Activated CD4-positive, alpha-beta memory T cell treated with anti-CD3 and anti-CD28 coated beads for 36 hours (primary cell): ENCODE measurements at regions of chr1 and their contacts with region 1.

Region 1: GRCh38 chr1:150259758-150260669 is 2.4 kb downstream of the CA14 start:
- DNase-seq: no peak
- H3K4me3 Mint-ChIP-seq: no peak overlapping the region
- H3K27ac Mint-ChIP-seq: no peak overlapping the region
- H3K4me1 Mint-ChIP-seq: peaks cover 18% of the 10 kb centered on the region
- H3K27me3 Mint-ChIP-seq: peaks cover 27% of the 10 kb centered on the region

Region 2: GRCh38 chr1:150293433-150294168 is 33.6 kb after region 1 on chr1 and contains the start of gene MRPS21:
- CTCF ChIA-PET with region 1: interaction called, 14 read pairs
- POLR2A ChIA-PET with region 1: interaction called, 3 read pairs
- intact Hi-C with region 1: no loop called
- DNase-seq: peak; percentile 94
- H3K4me3 Mint-ChIP-seq: peak within 1 kb of the TSS; percentile 96
- H3K27ac Mint-ChIP-seq: peak within 1 kb of the TSS; percentile 94
- H3K4me1 Mint-ChIP-seq: peaks cover 39% of the 10 kb centered on the region
- H3K27me3 Mint-ChIP-seq: no peaks in the 10 kb centered on the region
- total RNA-seq, gene MRPS21: 78.6 to 82.9 TPM

Region 3: GRCh38 chr1:150429805-150430204 is 169.8 kb after region 1 on chr1:
- CTCF ChIA-PET with region 1: interaction called, 3 read pairs
- POLR2A ChIA-PET with region 1: no interaction called
- intact Hi-C with region 1: loop called (anchors 5 kb)
- DNase-seq: no peak
- H3K4me3 Mint-ChIP-seq: no peak overlapping the region
- H3K27ac Mint-ChIP-seq: no peak overlapping the region
- H3K4me1 Mint-ChIP-seq: peaks cover 2% of the 10 kb centered on the region
- H3K27me3 Mint-ChIP-seq: no peaks in the 10 kb centered on the region

Region 4: GRCh38 chr1:150473659-150474058 is 213.6 kb after region 1 on chr1:
- CTCF ChIA-PET with region 1: no interaction called
- POLR2A ChIA-PET with region 1: no interaction called
- intact Hi-C with region 1: no loop called
- DNase-seq: no peak
- H3K4me3 Mint-ChIP-seq: no peak overlapping the region
- H3K27ac Mint-ChIP-seq: no peak overlapping the region
- H3K4me1 Mint-ChIP-seq: peaks cover 11% of the 10 kb centered on the region
- H3K27me3 Mint-ChIP-seq: no peaks in the 10 kb centered on the region

Region 5: GRCh38 chr1:150486964-150487762 is 227.1 kb after region 1 on chr1 and contains the start of gene TARS2:
- CTCF ChIA-PET with region 1: interaction called, 3 read pairs
- POLR2A ChIA-PET with region 1: no interaction called
- intact Hi-C with region 1: loop called (anchors 5 kb)
- DNase-seq: peak; percentile 98
- H3K4me3 Mint-ChIP-seq: peak within 1 kb of the TSS; percentile 83
- H3K27ac Mint-ChIP-seq: peak within 1 kb of the TSS; percentile 90
- H3K4me1 Mint-ChIP-seq: peaks cover 21% of the 10 kb centered on the region
- H3K27me3 Mint-ChIP-seq: no peaks in the 10 kb centered on the region
- total RNA-seq, gene TARS2: 46.3 to 51.7 TPM

Region 6: GRCh38 chr1:150532868-150533302 is 272.9 kb after region 1 on chr1:
- CTCF ChIA-PET with region 1: interaction called, 17 read pairs
- POLR2A ChIA-PET with region 1: no interaction called
- intact Hi-C with region 1: loop called (anchors 1 kb)
- DNase-seq: no peak
- H3K4me3 Mint-ChIP-seq: no peak overlapping the region
- H3K27ac Mint-ChIP-seq: no peak overlapping the region
- H3K4me1 Mint-ChIP-seq: no peaks in the 10 kb centered on the region
- H3K27me3 Mint-ChIP-seq: no peaks in the 10 kb centered on the region